MCF 10A (cell line): ENCODE measurements at regions of chr2 and their contacts with region 1.

Region 1: DNA sequence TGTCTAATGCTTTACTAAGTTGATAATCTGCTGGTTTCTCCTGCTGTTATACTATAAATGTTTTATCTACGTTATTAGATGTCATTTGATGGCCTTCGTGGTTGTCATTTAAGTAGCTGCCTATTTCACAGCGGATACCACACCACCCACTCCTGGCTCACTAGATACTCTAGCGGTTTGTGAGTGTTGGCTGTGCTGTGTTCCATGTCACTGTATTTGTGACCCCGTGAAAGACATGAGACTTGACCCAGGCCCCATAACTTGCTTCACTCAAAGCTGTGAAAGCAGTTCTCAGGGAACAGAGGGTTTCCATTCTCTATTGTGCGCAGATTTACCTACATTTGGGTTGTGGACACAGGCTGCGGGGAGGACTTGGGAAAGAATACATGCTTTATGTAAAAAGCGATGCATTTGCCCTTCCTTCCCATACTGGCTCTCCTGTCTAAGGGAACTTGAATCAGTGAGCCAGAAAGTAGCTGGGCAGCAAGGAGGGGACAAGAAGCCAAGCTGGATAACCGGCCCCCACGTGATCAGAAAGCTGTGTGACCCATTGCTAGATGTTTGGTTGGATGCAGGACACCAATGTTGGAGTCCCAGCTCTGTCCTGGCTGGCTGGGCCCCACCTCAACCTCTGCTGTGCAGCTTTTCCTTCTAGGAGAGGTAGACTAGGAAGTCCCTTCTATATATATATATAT is 52.2 kb downstream of the PLB1 start:
- DNase-seq: no peak
- H3K4me3 Mint-ChIP-seq: no peak overlapping the region
- H3K27ac Mint-ChIP-seq: no peak overlapping the region
- H3K4me1 Mint-ChIP-seq: peaks cover 10% of the 10 kb centered on the region
- H3K27me3 Mint-ChIP-seq: no peaks in the 10 kb centered on the region
- CTCF ChIP-seq: no peak

Region 2: GRCh38 chr2:28507806-28508764 is 40.0 kb before region 1 on chr2:
- CTCF ChIA-PET with region 1: no interaction called
- POLR2A ChIA-PET with region 1: no interaction called
- intact Hi-C with region 1: no loop called
- DNase-seq: peak; percentile 83
- H3K4me3 Mint-ChIP-seq: no peak overlapping the region
- H3K27ac Mint-ChIP-seq: peak overlapping the region; percentile 52
- H3K4me1 Mint-ChIP-seq: peaks cover 8% of the 10 kb centered on the region
- H3K27me3 Mint-ChIP-seq: peaks cover 1% of the 10 kb centered on the region
- CTCF ChIP-seq: no peak

Region 3: GRCh38 chr2:28558158-28558820 is 10.2 kb after region 1 on chr2:
- CTCF ChIA-PET with region 1: no interaction called
- POLR2A ChIA-PET with region 1: interaction called, 12 read pairs
- intact Hi-C with region 1: no loop called
- DNase-seq: no peak
- H3K4me3 Mint-ChIP-seq: no peak overlapping the region
- H3K27ac Mint-ChIP-seq: no peak overlapping the region
- H3K4me1 Mint-ChIP-seq: no peaks in the 10 kb centered on the region
- H3K27me3 Mint-ChIP-seq: no peaks in the 10 kb centered on the region
- CTCF ChIP-seq: no peak

Region 4: DNA sequence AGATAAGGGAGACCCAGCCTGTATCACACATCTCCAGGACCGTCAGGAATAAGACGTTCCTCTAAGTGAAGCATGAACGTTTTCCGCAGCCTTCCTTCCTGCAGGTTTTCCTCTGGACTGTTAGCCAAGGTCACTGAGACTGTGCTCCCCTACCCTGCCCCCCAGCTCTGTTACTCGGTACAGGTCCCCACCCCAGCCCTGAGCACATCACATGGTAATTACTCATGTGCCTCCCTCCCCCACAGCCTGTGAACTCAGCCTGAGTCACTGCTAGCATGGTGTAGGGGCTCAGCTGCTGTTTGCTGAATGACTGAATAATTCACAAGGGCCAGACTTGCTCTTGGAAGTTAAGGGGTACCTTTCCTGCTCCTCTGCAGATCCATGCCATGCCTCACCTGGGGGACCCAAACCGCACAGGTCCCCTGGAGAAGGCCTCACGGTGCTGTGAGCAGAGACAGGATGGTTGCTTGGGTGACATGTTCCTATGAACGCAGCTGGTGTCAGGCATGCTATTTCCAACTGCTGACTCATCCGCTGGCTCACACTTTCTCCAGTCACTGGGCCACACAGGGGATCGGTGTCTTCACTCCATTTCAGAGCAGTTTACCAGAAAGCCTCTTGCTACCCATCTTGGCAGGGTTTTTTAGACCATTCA is 36.0 kb after region 1 on chr2:
- CTCF ChIA-PET with region 1: no interaction called
- POLR2A ChIA-PET with region 1: no interaction called
- intact Hi-C with region 1: no loop called
- DNase-seq: peak; percentile 95
- H3K4me3 Mint-ChIP-seq: peak overlapping the region; percentile 61
- H3K27ac Mint-ChIP-seq: peak overlapping the region; percentile 84
- H3K4me1 Mint-ChIP-seq: peaks cover 34% of the 10 kb centered on the region
- H3K27me3 Mint-ChIP-seq: no peaks in the 10 kb centered on the region
- CTCF ChIP-seq: no peak